Naive thymus-derived CD4-positive, alpha-beta T cell (primary cell): ENCODE measurements at regions of chr11 and their contacts with region 1.

Region 1: DNA sequence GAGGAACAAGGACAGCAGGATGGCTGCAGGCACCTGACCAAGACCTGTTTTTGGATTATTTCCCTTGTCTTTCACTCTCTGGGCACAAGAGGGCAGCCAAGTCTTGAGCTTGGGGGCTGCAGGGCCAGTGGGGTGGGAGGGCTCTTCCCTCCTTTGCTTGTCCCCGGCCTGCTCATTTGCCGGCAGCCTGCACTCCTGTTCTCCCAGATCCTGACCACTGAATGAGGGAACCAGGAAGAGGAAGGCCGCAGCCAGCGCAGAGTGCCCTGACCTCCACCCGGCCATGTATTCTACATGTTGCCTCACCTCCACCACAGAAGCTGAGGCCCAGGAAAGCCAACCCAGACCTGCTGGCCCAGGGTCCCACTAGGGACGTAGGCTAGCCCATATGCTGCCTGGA is 15.5 kb upstream of the NNMT start:
- DNase-seq: peak in 5 of 9 donors; percentile 24 to 39 (median 26)
- ATAC-seq: no peak
- H3K4me3 ChIP-seq: no peak overlapping the region
- H3K4me3 Mint-ChIP-seq: no peak overlapping the region
- H3K27ac ChIP-seq: no peak overlapping the region
- H3K27ac Mint-ChIP-seq: peak overlapping the region in 1 of 9 donors; percentile 56
- H3K4me1 ChIP-seq: no peaks in the 10 kb centered on the region
- H3K4me1 Mint-ChIP-seq: no peaks in the 10 kb centered on the region
- H3K27me3 ChIP-seq: no peaks in the 10 kb centered on the region
- H3K27me3 Mint-ChIP-seq: peaks cover 5 to 34% (median 18%) of the 10 kb centered on the region in 5 donors

Region 2: GRCh38 chr11:114265122-114265878 is 15.4 kb before region 1 on chr11:
- CTCF ChIA-PET with region 1: no interaction called
- POLR2A ChIA-PET with region 1: no interaction called
- intact Hi-C with region 1: no loop called
- DNase-seq: no peak
- ATAC-seq: no peak
- H3K4me3 ChIP-seq: no peak overlapping the region
- H3K4me3 Mint-ChIP-seq: no peak overlapping the region
- H3K27ac ChIP-seq: no peak overlapping the region
- H3K27ac Mint-ChIP-seq: no peak overlapping the region
- H3K4me1 ChIP-seq: no peaks in the 10 kb centered on the region
- H3K4me1 Mint-ChIP-seq: no peaks in the 10 kb centered on the region
- H3K27me3 ChIP-seq: no peaks in the 10 kb centered on the region
- H3K27me3 Mint-ChIP-seq: peaks cover 0 to 9% (median 5%) of the 10 kb centered on the region in 5 donors

Region 3: GRCh38 chr11:114317787-114318137 is 37.1 kb after region 1 on chr11:
- CTCF ChIA-PET with region 1: interaction called, 3 read pairs
- POLR2A ChIA-PET with region 1: interaction called, 3 read pairs
- intact Hi-C with region 1: loop called in 1 of 2 experiments (anchors 2 kb)
- DNase-seq: no peak
- ATAC-seq: no peak
- H3K4me3 ChIP-seq: no peak overlapping the region
- H3K4me3 Mint-ChIP-seq: peak overlapping the region in 6 of 10 donors; percentile 28 to 79 (median 57)
- H3K27ac ChIP-seq: peak overlapping the region; percentile 66
- H3K27ac Mint-ChIP-seq: peak overlapping the region in 8 of 9 donors; percentile 73 to 98 (median 92)
- H3K4me1 ChIP-seq: peaks cover 0 to 50% of the 10 kb centered on the region in 2 donors
- H3K4me1 Mint-ChIP-seq: peaks cover 16 to 73% (median 56%) of the 10 kb centered on the region in 7 donors
- H3K27me3 ChIP-seq: no peaks in the 10 kb centered on the region
- H3K27me3 Mint-ChIP-seq: peaks cover 0 to 3% (median 0%) of the 10 kb centered on the region in 5 donors

Region 4: GRCh38 chr11:114571712-114572111 is 291.0 kb after region 1 on chr11:
- CTCF ChIA-PET with region 1: no interaction called
- POLR2A ChIA-PET with region 1: no interaction called
- intact Hi-C with region 1: loop called in 1 of 2 experiments (anchors 10 kb)
- DNase-seq: no peak
- ATAC-seq: no peak
- H3K4me3 ChIP-seq: no peak overlapping the region
- H3K4me3 Mint-ChIP-seq: no peak overlapping the region
- H3K27ac ChIP-seq: no peak overlapping the region
- H3K27ac Mint-ChIP-seq: no peak overlapping the region
- H3K4me1 ChIP-seq: no peaks in the 10 kb centered on the region
- H3K4me1 Mint-ChIP-seq: no peaks in the 10 kb centered on the region
- H3K27me3 ChIP-seq: no peaks in the 10 kb centered on the region
- H3K27me3 Mint-ChIP-seq: peaks cover 0 to 23% (median 13%) of the 10 kb centered on the region in 5 donors